ENCODE measurements at regions of chr19 and their contacts with region 1.

Region 1: GRCh38 chr19:16628183-16628983 is at the start of gene MED26:
- DNase-seq: peak; percentile 91 to 97 (median 94)
- ATAC-seq: peak; percentile 97
- H3K4me3 ChIP-seq: peak within 1 kb of the TSS; percentile 92
- H3K4me3 Mint-ChIP-seq: peak within 1 kb of the TSS; percentile 92 to 98 (median 97)
- H3K27ac ChIP-seq: peak within 1 kb of the TSS; percentile 97
- H3K27ac Mint-ChIP-seq: peak within 1 kb of the TSS; percentile 88 to 99 (median 98)
- H3K4me1 ChIP-seq: peaks cover 15% of the 10 kb centered on the region in 2 donors
- H3K4me1 Mint-ChIP-seq: peaks cover 34 to 49% (median 44%) of the 10 kb centered on the region in 7 donors
- H3K27me3 ChIP-seq: no peaks in the 10 kb centered on the region
- H3K27me3 Mint-ChIP-seq: peaks cover 0 to 1% (median 0%) of the 10 kb centered on the region in 5 donors
- total RNA-seq, gene MED26: 14.2 to 34.3 (median 17.4) TPM

Region 2: GRCh38 chr19:16076154-16076957 is 552.0 kb before region 1 on chr19 and contains the start of gene TPM4:
- CTCF ChIA-PET with region 1: no interaction called
- POLR2A ChIA-PET with region 1: no interaction called
- intact Hi-C with region 1: loop called in 1 of 2 experiments (anchors 1 kb)
- DNase-seq: peak; percentile 43 to 89 (median 50)
- ATAC-seq: peak; percentile 68
- H3K4me3 ChIP-seq: peak within 1 kb of the TSS; percentile 82
- H3K4me3 Mint-ChIP-seq: peak within 1 kb of the TSS; percentile 84 to 97 (median 90)
- H3K27ac ChIP-seq: peak within 1 kb of the TSS; percentile 89
- H3K27ac Mint-ChIP-seq: peak within 1 kb of the TSS; percentile 90 to 99 (median 97)
- H3K4me1 ChIP-seq: peaks cover 29 to 72% of the 10 kb centered on the region in 2 donors
- H3K4me1 Mint-ChIP-seq: peaks cover 54 to 80% (median 65%) of the 10 kb centered on the region in 7 donors
- H3K27me3 ChIP-seq: no peaks in the 10 kb centered on the region
- H3K27me3 Mint-ChIP-seq: no peaks in the 10 kb centered on the region
- total RNA-seq, gene TPM4: 65.8 to 435 (median 126) TPM

Region 3: GRCh38 chr19:16495982-16496612 is 132.3 kb before region 1 on chr19 and contains the starts of genes C19orf44 and CALR3:
- CTCF ChIA-PET with region 1: no interaction called
- POLR2A ChIA-PET with region 1: interaction called, 3 read pairs
- intact Hi-C with region 1: loop called (anchors 1 kb)
- DNase-seq: peak; percentile 84 to 97 (median 96)
- ATAC-seq: peak; percentile 99
- H3K4me3 ChIP-seq: peak within 1 kb of the TSS; percentile 90
- H3K4me3 Mint-ChIP-seq: peak within 1 kb of the TSS; percentile 86 to 98 (median 94)
- H3K27ac ChIP-seq: peak within 1 kb of the TSS; percentile 72
- H3K27ac Mint-ChIP-seq: peak within 1 kb of the TSS; percentile 74 to 98 (median 87)
- H3K4me1 ChIP-seq: peaks cover 0 to 4% of the 10 kb centered on the region in 2 donors
- H3K4me1 Mint-ChIP-seq: peaks cover 10 to 23% (median 19%) of the 10 kb centered on the region in 7 donors
- H3K27me3 ChIP-seq: no peaks in the 10 kb centered on the region
- H3K27me3 Mint-ChIP-seq: no peaks in the 10 kb centered on the region
- total RNA-seq, gene C19orf44: 1.5 to 6.0 (median 3.4) TPM
- total RNA-seq, gene CALR3: not detected

Region 4: DNA sequence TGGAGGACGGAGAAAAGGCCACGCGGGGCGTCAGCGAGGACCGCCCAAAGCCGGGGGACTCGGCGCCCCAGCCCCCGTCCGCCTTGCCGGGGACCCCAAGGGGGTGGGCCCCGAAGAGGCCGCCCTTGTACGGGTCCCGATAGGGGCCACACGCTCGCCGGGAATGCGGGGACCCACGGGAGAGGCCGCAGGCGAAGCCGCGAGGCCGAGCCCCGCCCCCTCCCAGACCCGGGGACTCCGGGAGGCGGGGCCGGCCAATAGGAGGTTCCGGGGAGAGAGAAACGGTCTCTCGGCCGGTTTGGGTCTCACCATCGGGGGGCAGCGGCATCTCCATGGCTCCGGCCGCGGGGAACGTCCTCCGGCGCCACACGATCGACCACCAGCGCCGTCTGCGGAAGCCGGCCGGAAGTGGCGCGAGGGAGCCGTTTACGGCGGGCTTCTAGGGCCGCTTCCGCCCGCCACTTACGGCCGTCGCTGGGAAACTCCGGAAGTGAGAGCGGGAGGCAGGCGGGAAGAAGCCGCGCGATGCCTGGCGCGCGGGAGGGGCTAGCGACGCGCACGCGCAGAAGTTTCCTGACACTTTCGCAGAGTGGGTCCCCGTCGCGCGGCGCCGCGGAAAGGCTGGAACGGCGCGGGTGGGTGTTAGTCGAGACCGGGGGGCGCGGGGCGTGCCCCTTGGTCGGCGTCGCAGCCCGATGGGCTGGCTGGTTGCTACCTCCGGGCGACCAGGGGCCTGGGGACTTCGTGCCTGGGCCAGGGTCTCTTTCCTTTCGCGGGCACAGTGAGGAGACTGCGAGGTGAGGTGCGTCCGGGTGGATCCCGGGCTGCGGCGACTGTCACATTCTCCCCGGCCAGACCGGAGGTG is 86.1 kb before region 1 on chr19 and contains the start of gene CHERP:
- CTCF ChIA-PET with region 1: no interaction called
- POLR2A ChIA-PET with region 1: interaction called, 6 read pairs
- intact Hi-C with region 1: loop called (anchors 1 kb)
- DNase-seq: peak; percentile 90 to 96 (median 93)
- ATAC-seq: peak; percentile 95
- H3K4me3 ChIP-seq: peak within 1 kb of the TSS; percentile 90
- H3K4me3 Mint-ChIP-seq: peak within 1 kb of the TSS; percentile 90 to 99 (median 92)
- H3K27ac ChIP-seq: peak within 1 kb of the TSS; percentile 91
- H3K27ac Mint-ChIP-seq: peak within 1 kb of the TSS; percentile 81 to 97 (median 93)
- H3K4me1 ChIP-seq: peaks cover 25 to 39% of the 10 kb centered on the region in 2 donors
- H3K4me1 Mint-ChIP-seq: peaks cover 44 to 69% (median 55%) of the 10 kb centered on the region in 7 donors
- H3K27me3 ChIP-seq: no peaks in the 10 kb centered on the region
- H3K27me3 Mint-ChIP-seq: no peaks in the 10 kb centered on the region
- total RNA-seq, gene CHERP: 53.8 to 80.7 (median 62.7) TPM

Region 5: DNA sequence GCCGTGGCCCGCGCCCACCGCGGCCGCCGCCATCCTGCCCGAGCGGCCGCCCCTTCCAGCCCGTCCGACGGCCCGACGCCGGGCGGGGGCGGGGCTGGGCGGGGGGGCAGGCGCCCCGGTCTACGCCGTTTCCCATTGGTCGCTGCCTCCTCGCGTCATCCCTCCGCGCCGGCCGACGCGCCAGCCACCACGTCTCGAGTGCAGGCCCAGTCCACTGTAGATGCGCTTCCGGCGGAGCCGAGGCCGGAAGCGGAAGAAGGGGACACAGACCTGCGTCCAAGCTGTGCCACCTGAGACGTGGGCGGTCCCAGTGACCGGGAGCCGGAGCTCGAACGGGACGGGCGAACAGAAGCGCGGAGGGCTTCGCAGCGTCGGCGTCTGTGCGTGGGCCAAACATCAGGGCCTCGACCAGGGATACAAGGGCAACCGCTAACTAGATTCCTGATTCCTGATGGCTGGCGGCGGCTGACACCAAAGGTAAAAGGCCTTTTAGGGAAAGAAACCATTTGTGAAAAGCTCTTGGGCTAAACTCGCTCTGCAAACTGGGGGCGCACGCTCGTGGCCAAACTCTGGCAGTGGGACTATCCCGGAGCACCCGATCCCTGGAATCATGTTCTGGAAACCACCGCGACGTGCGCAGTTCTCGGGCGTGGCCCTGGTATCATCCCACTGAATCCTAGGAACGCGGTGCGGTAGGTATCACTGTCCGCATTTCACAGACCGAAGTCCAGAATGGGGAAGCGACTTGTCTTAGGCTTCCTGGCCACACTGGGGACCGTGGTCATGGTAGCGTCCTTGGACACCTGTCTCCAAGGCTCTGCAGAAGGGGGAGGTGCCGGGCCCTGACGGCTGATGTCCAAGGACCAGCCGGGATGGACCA is 55.8 kb before region 1 on chr19 and contains the start of gene SLC35E1:
- CTCF ChIA-PET with region 1: interaction called, 4 read pairs
- POLR2A ChIA-PET with region 1: interaction called, 3 read pairs
- intact Hi-C with region 1: loop called (anchors 1 kb)
- DNase-seq: peak; percentile 80 to 92 (median 89)
- ATAC-seq: peak; percentile 98
- H3K4me3 ChIP-seq: peak within 1 kb of the TSS; percentile 97
- H3K4me3 Mint-ChIP-seq: peak within 1 kb of the TSS; percentile 97 to 100 (median 99)
- H3K27ac ChIP-seq: peak within 1 kb of the TSS; percentile 95
- H3K27ac Mint-ChIP-seq: peak within 1 kb of the TSS; percentile 94 to 100 (median 99)
- H3K4me1 ChIP-seq: peaks cover 28 to 30% of the 10 kb centered on the region in 2 donors
- H3K4me1 Mint-ChIP-seq: peaks cover 35 to 74% (median 47%) of the 10 kb centered on the region in 7 donors
- H3K27me3 ChIP-seq: no peaks in the 10 kb centered on the region
- H3K27me3 Mint-ChIP-seq: peaks cover 0 to 2% (median 0%) of the 10 kb centered on the region in 5 donors
- total RNA-seq, gene SLC35E1: 33.0 to 67.3 (median 58.7) TPM

Region 6: DNA sequence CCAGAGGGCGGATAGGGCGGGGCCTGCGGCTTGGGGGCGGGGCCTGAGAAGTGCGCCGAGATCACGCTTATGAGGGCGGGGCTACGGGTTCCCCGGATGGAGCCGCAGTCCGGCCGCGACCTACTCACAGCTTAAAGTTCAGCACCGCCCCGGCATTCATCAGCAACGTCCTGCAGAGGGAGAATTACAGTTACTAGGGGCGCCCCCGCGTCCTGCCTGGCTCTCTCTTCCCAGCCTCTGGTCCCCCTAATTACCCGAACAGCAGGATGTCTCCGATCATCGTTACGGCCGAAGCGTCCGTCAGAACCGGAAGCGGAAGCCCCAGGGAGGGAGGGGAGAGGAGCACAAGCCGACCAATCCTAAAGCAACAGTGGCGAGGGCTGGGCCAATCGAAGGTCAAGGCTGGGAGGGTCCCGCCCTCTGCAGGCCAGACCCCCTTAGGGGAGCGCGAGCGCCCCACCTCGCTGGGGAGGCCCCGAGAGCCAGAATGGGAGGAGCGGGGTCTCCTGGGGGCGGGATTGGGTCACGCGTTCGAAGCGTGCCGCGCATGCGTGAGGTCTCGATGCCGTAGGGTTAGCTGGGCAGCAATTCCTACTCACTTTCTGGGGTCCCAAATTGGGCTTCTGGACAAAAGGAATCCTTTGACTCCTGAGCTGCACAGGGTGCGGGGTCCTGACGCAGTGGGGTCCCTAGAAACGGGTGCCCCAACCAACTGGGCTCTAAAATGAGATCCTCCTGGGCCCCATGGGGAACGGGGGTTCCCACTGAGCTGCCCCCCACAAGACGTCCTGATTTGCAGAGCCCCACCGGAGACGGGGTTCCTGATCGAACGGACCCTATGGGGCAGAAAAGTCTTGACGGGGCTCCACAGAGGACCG is 31.7 kb after region 1 on chr19 and contains the start of gene SMIM7:
- CTCF ChIA-PET with region 1: interaction called, 3 read pairs
- POLR2A ChIA-PET with region 1: interaction called, 40 read pairs
- intact Hi-C with region 1: loop called (anchors 1 kb)
- DNase-seq: peak; percentile 95 to 100 (median 99)
- ATAC-seq: peak; percentile 98
- H3K4me3 ChIP-seq: peak within 1 kb of the TSS; percentile 74
- H3K4me3 Mint-ChIP-seq: peak within 1 kb of the TSS; percentile 88 to 100 (median 98)
- H3K27ac ChIP-seq: peak within 1 kb of the TSS; percentile 91
- H3K27ac Mint-ChIP-seq: peak within 1 kb of the TSS; percentile 96 to 99 (median 98)
- H3K4me1 ChIP-seq: peaks cover 19 to 30% of the 10 kb centered on the region in 2 donors
- H3K4me1 Mint-ChIP-seq: peaks cover 22 to 55% (median 41%) of the 10 kb centered on the region in 7 donors
- H3K27me3 ChIP-seq: no peaks in the 10 kb centered on the region
- H3K27me3 Mint-ChIP-seq: peaks cover 0 to 24% (median 0%) of the 10 kb centered on the region in 5 donors
- total RNA-seq, gene SMIM7: 56.9 to 108 (median 78.5) TPM

Measured in naive thymus-derived CD4-positive, alpha-beta T cell (primary cell).